ENCODE measurements at regions of chr6 and their contacts with region 1.

Region 1: DNA sequence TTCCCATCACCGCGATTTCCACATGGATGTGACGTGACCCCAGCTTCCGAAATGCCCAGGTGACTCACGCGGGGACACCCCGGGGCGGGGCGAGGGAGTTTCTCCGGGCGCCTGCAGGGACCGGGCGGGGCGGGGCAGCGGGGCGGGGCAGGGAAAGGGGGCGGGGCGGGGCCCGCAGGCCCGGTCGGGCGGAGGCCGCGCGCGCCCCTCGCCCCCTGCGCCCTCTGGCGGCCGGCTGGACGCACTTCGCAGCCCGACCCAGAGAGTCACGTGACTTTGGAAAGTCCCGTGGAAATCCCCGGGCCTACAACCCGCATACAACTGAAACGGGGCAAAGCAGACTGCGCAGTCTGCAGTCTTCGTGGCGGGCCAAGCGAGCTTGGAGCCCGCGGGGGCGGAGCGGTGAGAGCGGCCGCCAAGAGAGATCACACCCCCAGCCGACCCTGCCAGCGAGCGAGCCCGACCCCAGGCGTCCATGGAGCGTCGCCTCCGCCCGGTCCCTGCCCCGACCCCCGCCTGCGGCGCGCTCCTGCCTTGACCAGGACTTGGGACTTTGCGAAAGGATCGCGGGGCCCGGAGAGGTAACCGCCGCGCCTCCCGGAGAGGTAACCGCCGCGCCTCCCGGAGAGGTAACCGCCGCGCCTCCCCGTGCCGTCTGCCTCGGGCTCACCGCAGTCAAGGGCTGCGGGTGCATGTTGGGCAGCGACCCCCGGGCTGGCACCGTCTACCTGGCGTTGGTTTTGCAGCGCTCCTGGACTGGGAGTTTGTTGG is at the start of gene TNFAIP3:
- DNase-seq: peak; percentile 96 to 97 (median 97)
- H3K4me3 ChIP-seq: peak within 1 kb of the TSS; percentile 78 to 93
- H3K4me3 Mint-ChIP-seq: peak within 1 kb of the TSS; percentile 89 to 100 (median 96)
- H3K27ac ChIP-seq: peak within 1 kb of the TSS; percentile 99
- H3K27ac Mint-ChIP-seq: peak within 1 kb of the TSS; percentile 96 to 99 (median 99)
- H3K4me1 ChIP-seq: peaks cover 32% of the 10 kb centered on the region
- H3K4me1 Mint-ChIP-seq: peaks cover 29 to 68% (median 42%) of the 10 kb centered on the region in 4 donors
- H3K27me3 ChIP-seq: no peaks in the 10 kb centered on the region
- H3K27me3 Mint-ChIP-seq: peaks cover 0 to 4% of the 10 kb centered on the region in 2 donors
- total RNA-seq, gene TNFAIP3: 145 to 165 TPM

Region 2: GRCh38 chr6:137717074-137718073 is 149.7 kb before region 1 on chr6:
- CTCF ChIA-PET with region 1: interaction called, 36 read pairs
- POLR2A ChIA-PET with region 1: interaction called, 134 read pairs
- intact Hi-C with region 1: loop called (anchors 1 kb)
- DNase-seq: peak; percentile 87 to 97 (median 91)
- H3K4me3 ChIP-seq: no peak overlapping the region
- H3K4me3 Mint-ChIP-seq: peak overlapping the region in 7 of 8 donors; percentile 30 to 80 (median 67)
- H3K27ac ChIP-seq: peak overlapping the region; percentile 83
- H3K27ac Mint-ChIP-seq: peak overlapping the region; percentile 93 to 100 (median 99)
- H3K4me1 ChIP-seq: peaks cover 42% of the 10 kb centered on the region
- H3K4me1 Mint-ChIP-seq: peaks cover 37 to 56% (median 46%) of the 10 kb centered on the region in 4 donors
- H3K27me3 ChIP-seq: no peaks in the 10 kb centered on the region
- H3K27me3 Mint-ChIP-seq: no peaks in the 10 kb centered on the region

Region 3: GRCh38 chr6:137811121-137811915 is 55.8 kb before region 1 on chr6:
- CTCF ChIA-PET with region 1: interaction called, 4 read pairs
- POLR2A ChIA-PET with region 1: interaction called, 39 read pairs
- intact Hi-C with region 1: loop called (anchors 1 kb)
- DNase-seq: peak; percentile 68 to 93 (median 75)
- H3K4me3 ChIP-seq: peak overlapping the region in 1 of 2 donors; percentile 25
- H3K4me3 Mint-ChIP-seq: peak overlapping the region in 7 of 8 donors; percentile 47 to 86 (median 77)
- H3K27ac ChIP-seq: peak overlapping the region; percentile 65
- H3K27ac Mint-ChIP-seq: peak overlapping the region; percentile 83 to 98 (median 95)
- H3K4me1 ChIP-seq: peaks cover 28% of the 10 kb centered on the region
- H3K4me1 Mint-ChIP-seq: peaks cover 23 to 38% (median 30%) of the 10 kb centered on the region in 4 donors
- H3K27me3 ChIP-seq: no peaks in the 10 kb centered on the region
- H3K27me3 Mint-ChIP-seq: no peaks in the 10 kb centered on the region

Region 4: GRCh38 chr6:137878486-137879285 is 11.6 kb after region 1 on chr6:
- CTCF ChIA-PET with region 1: interaction called, 84 read pairs
- POLR2A ChIA-PET with region 1: interaction called, 125 read pairs
- intact Hi-C with region 1: loop called (anchors 1 kb)
- DNase-seq: peak; percentile 46 to 59 (median 50)
- H3K4me3 ChIP-seq: no peak overlapping the region
- H3K4me3 Mint-ChIP-seq: peak overlapping the region in 5 of 8 donors; percentile 52 to 76 (median 63)
- H3K27ac ChIP-seq: peak overlapping the region; percentile 14
- H3K27ac Mint-ChIP-seq: peak overlapping the region; percentile 63 to 99 (median 84)
- H3K4me1 ChIP-seq: peaks cover 90% of the 10 kb centered on the region
- H3K4me1 Mint-ChIP-seq: peaks cover 35 to 98% (median 67%) of the 10 kb centered on the region in 4 donors
- H3K27me3 ChIP-seq: no peaks in the 10 kb centered on the region
- H3K27me3 Mint-ChIP-seq: no peaks in the 10 kb centered on the region

Region 5: DNA sequence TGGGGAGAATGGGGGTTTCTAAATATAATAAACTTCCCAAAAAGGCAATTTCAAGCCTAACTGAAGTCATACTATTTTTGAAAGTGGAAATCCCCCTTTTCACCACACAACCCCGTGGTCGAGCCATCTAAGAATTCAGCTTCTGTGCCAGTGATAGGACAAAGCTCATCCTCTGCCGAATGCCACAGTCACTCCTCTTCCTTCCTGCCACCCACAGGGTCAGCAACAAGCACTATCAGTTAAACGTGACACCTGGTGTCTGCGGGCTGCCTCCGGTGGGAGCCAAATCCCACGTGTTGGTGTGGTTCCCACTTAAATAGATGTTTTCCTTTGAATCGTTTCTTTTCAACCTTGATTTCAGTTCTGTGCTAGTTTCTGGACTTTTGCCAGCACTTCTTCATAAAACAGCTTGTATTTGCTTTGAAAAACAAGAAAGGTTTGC is 60.7 kb after region 1 on chr6:
- CTCF ChIA-PET with region 1: interaction called, 8 read pairs
- POLR2A ChIA-PET with region 1: interaction called, 9 read pairs
- intact Hi-C with region 1: loop called (anchors 1 kb)
- DNase-seq: peak; percentile 76 to 93 (median 81)
- H3K4me3 ChIP-seq: peak overlapping the region in 1 of 2 donors; percentile 6
- H3K4me3 Mint-ChIP-seq: peak overlapping the region in 7 of 8 donors; percentile 19 to 78 (median 76)
- H3K27ac ChIP-seq: peak overlapping the region; percentile 34
- H3K27ac Mint-ChIP-seq: peak overlapping the region; percentile 49 to 94 (median 84)
- H3K4me1 ChIP-seq: peaks cover 31% of the 10 kb centered on the region
- H3K4me1 Mint-ChIP-seq: peaks cover 18 to 35% (median 26%) of the 10 kb centered on the region in 4 donors
- H3K27me3 ChIP-seq: no peaks in the 10 kb centered on the region
- H3K27me3 Mint-ChIP-seq: no peaks in the 10 kb centered on the region

Region 6: GRCh38 chr6:137944793-137945498 is 77.8 kb after region 1 on chr6:
- CTCF ChIA-PET with region 1: interaction called, 97 read pairs
- POLR2A ChIA-PET with region 1: interaction called, 12 read pairs
- intact Hi-C with region 1: loop called (anchors 1 kb)
- DNase-seq: peak in 4 of 5 donors; percentile 41 to 56 (median 48)
- H3K4me3 ChIP-seq: no peak overlapping the region
- H3K4me3 Mint-ChIP-seq: peak overlapping the region in 1 of 8 donors; percentile 12
- H3K27ac ChIP-seq: no peak overlapping the region
- H3K27ac Mint-ChIP-seq: peak overlapping the region in 5 of 7 donors; percentile 10 to 67 (median 63)
- H3K4me1 ChIP-seq: peaks cover 16% of the 10 kb centered on the region
- H3K4me1 Mint-ChIP-seq: peaks cover 13 to 22% (median 19%) of the 10 kb centered on the region in 4 donors
- H3K27me3 ChIP-seq: no peaks in the 10 kb centered on the region
- H3K27me3 Mint-ChIP-seq: no peaks in the 10 kb centered on the region

Region 7: DNA sequence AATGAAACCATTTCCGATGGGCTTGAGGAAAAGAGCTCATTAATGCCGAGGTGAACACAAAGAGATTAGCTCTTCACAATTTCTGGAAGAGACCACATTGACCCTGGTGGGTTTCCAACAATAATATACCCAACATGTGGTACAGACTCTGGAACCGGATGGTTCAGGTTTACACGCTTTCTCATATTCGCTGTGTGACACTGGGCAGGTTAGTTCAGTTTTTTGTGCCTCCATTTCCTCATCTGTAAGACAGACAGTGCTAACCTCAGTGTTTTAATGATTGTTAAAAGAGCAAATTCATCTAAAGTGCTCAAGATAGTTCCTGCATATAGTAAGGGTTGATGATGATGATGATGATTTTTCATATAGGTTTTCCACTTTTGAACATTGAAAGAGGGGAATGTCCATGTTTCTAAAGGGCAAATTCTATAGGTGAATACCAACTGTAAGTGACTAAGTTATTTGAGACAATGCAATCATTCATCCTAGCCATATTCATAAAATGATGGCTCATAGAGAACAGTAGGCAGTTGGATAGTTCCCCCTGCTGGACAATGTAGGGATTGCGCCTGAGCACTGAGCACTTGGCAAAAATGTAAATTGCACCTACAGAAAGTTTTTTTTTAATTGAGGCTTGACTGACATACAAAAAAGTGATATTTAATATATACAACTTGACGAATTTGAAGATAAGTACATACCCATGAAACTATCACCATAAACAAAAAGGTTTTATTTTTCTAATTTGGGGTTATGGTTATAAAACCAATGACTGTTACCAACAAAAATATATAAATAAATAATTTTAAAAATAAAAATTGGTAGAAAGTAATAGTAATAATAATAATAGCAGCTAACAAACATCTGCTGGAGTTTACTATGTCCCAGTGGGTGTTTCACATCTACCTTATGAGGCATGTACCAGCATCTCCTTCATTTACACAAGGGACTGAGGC is 242.2 kb after region 1 on chr6:
- CTCF ChIA-PET with region 1: interaction called, 6 read pairs
- POLR2A ChIA-PET with region 1: interaction called, 3 read pairs
- intact Hi-C with region 1: loop called (anchors 2 kb)
- DNase-seq: peak; percentile 69 to 75 (median 75)
- H3K4me3 ChIP-seq: no peak overlapping the region
- H3K4me3 Mint-ChIP-seq: peak overlapping the region in 2 of 8 donors; percentile 52 to 55
- H3K27ac ChIP-seq: no peak overlapping the region
- H3K27ac Mint-ChIP-seq: peak overlapping the region in 3 of 7 donors; percentile 8 to 65 (median 11)
- H3K4me1 ChIP-seq: peaks cover 25% of the 10 kb centered on the region
- H3K4me1 Mint-ChIP-seq: peaks cover 16 to 37% (median 17%) of the 10 kb centered on the region in 4 donors
- H3K27me3 ChIP-seq: no peaks in the 10 kb centered on the region
- H3K27me3 Mint-ChIP-seq: peaks cover 3% of the 10 kb centered on the region in 2 donors